A549 (cell line): ENCODE measurements at regions of chr12 and their contacts with region 1.

Region 1: GRCh38 chr12:56224102-56224701 is at the start of gene NABP2:
- DNase-seq: peak; percentile 99
- ATAC-seq: peak; percentile 84 to 89
- H3K4me3 ChIP-seq: peak within 1 kb of the TSS; percentile 66
- H3K27ac ChIP-seq: peak within 1 kb of the TSS; percentile 80 to 94
- H3K4me1 ChIP-seq: peaks cover 26% of the 10 kb centered on the region
- CTCF ChIP-seq: peak; percentile 95
- EP300 ChIP-seq: no peak
- POLR2A ChIP-seq: peak; percentile 61
- RAD21 ChIP-seq: peak; percentile 57 to 73
- polyA plus RNA-seq, gene NABP2: 86.1 and 86.7 TPM in 2 replicates

Region 2: DNA sequence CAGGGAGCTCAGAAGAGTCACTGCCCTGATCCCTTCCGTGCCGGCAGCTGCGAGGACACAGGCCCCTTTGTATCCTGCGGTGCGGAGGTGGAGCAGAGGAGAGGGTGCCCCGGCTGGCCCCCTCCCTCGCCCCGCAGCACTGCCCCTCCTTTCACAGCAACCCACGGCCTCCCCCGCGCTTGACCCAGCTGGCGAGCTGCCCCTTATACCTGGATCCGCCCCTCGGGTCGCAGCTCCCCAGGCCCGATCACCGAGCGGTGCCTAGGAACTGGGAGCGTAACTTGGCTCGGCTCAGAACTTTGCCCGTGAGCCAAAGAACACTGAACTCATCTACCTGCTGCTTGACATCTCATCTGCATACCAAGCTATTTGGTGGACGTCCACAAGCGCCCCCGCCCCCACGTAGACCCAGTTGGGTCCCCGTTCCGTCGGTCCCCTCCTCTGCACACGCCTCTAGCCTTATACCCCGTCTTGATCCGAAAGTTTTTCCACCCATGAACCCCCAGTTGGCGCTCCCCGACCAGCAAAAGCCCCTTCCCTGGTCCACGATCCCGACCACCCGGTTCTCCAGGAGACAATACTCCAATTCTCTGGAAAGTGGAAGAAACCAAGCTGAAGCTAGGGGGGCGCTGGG is 394.1 kb before region 1 on chr12:
- CTCF ChIA-PET with region 1: no interaction called
- POLR2A ChIA-PET with region 1: no interaction called
- DNase-seq: peak; percentile 23 to 28
- ATAC-seq: peak; percentile 65 to 74
- H3K4me3 ChIP-seq: peak overlapping the region; percentile 80
- H3K27ac ChIP-seq: peak overlapping the region; percentile 89 to 91
- H3K4me1 ChIP-seq: peaks cover 28% of the 10 kb centered on the region; the same call in 2 of the 3 replicates
- CTCF ChIP-seq: no peak
- EP300 ChIP-seq: no peak
- POLR2A ChIP-seq: peak; percentile 22; the same call in 1 of the 2 replicates
- RAD21 ChIP-seq: no peak; a peak in 1 of 5 replicates

Region 3: GRCh38 chr12:56152318-56153033 is 71.7 kb before region 1 on chr12 and contains the start of gene MYL6B:
- CTCF ChIA-PET with region 1: no interaction called
- POLR2A ChIA-PET with region 1: no interaction called
- DNase-seq: peak; percentile 94
- ATAC-seq: peak; percentile 89 to 93
- H3K4me3 ChIP-seq: peak within 1 kb of the TSS; percentile 53
- H3K27ac ChIP-seq: peak within 1 kb of the TSS; percentile 92 to 93
- H3K4me1 ChIP-seq: peaks cover 21% of the 10 kb centered on the region; the same call in 2 of the 3 replicates
- CTCF ChIP-seq: no peak
- EP300 ChIP-seq: no peak
- POLR2A ChIP-seq: peak; percentile 71
- RAD21 ChIP-seq: no peak
- polyA plus RNA-seq, gene MYL6B: 48.2 and 67.0 TPM in 2 replicates

Region 4: GRCh38 chr12:56198836-56199235 is 25.4 kb before region 1 on chr12:
- CTCF ChIA-PET with region 1: interaction called, 67 read pairs
- POLR2A ChIA-PET with region 1: interaction called, 17 read pairs
- DNase-seq: no peak
- ATAC-seq: no peak
- H3K4me3 ChIP-seq: no peak overlapping the region
- H3K27ac ChIP-seq: no peak overlapping the region
- H3K4me1 ChIP-seq: no peaks in the 10 kb centered on the region
- CTCF ChIP-seq: no peak
- EP300 ChIP-seq: no peak
- POLR2A ChIP-seq: no peak
- RAD21 ChIP-seq: no peak

Region 5: GRCh38 chr12:56212361-56212760 is 11.8 kb before region 1 on chr12:
- CTCF ChIA-PET with region 1: interaction called, 67 read pairs
- POLR2A ChIA-PET with region 1: interaction called, 34 read pairs
- DNase-seq: no peak
- ATAC-seq: no peak
- H3K4me3 ChIP-seq: no peak overlapping the region
- H3K27ac ChIP-seq: no peak overlapping the region
- H3K4me1 ChIP-seq: no peaks in the 10 kb centered on the region
- CTCF ChIP-seq: no peak
- EP300 ChIP-seq: no peak
- POLR2A ChIP-seq: no peak
- RAD21 ChIP-seq: no peak

Region 6: GRCh38 chr12:56258057-56258819 is 34.0 kb after region 1 on chr12 and contains the start of gene ANKRD52:
- CTCF ChIA-PET with region 1: interaction called, 16 read pairs
- POLR2A ChIA-PET with region 1: interaction called, 21 read pairs
- DNase-seq: peak; percentile 80 to 88
- ATAC-seq: peak; percentile 86 to 89
- H3K4me3 ChIP-seq: peak within 1 kb of the TSS; percentile 94
- H3K27ac ChIP-seq: peak within 1 kb of the TSS; percentile 92 to 97
- H3K4me1 ChIP-seq: peaks cover 47% of the 10 kb centered on the region
- CTCF ChIP-seq: peak; percentile 87
- EP300 ChIP-seq: no peak
- POLR2A ChIP-seq: peak; percentile 65
- RAD21 ChIP-seq: 0 out of 5 replicates have a peak, but pooled peaks of 1 of the 2 experiments have one; percentile 39
- polyA plus RNA-seq, gene ANKRD52: 26.1 and 35.1 TPM in 2 replicates